PC-9 (cell line): ENCODE measurements at regions of chr11 and their contacts with region 1.

Region 1: DNA sequence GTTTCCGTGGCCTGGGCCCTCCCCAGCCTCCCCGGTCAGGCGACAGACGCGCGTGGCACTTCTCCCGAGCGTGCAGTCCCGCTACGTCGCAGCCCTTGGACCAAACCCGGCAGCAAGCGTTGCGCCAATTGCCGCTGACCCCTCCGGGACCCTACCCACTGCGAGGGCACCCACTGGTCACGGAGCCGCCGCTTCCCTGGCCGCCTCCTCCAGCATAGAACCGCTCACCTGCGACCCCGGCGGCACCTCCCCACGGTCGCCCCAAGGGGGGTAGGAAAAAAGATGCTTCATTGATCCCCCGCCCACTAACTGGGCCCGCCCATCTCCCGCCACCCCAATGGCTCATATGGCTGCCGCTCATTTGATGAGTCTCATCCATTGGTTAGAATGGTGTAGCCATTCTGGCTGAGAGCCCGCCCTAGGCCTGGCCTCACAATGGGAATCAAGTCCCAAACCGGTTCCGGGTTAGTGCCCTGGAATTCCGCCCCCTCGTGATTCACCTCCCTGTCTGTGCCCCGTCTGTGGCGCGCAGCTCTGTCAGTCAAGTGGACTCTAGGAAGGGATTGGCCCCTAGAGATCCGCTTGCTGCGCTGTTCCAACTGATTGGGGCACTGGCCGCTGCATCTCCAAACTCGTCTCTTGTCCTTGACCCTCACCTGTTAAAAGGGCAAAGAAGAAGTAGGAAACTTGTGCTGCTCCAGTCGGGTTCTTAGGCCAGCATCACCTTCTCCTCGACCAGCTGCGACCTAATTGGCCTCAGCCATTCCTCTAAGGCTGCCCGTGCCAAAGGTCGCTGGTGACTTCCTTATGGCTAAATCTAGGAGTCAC is at the start of gene MSANTD4:
- DNase-seq: peak; percentile 97 to 100
- H3K4me3 ChIP-seq: peak within 1 kb of the TSS; percentile 86
- H3K27ac ChIP-seq: peak within 1 kb of the TSS; percentile 36; the same call in 1 of the 2 replicates
- H3K4me1 ChIP-seq: peaks cover 30% of the 10 kb centered on the region
- H3K27me3 ChIP-seq: no peaks in the 10 kb centered on the region
- CTCF ChIP-seq: no peak
- total RNA-seq, gene MSANTD4: 11.0 and 13.6 TPM in 2 replicates

Region 2: DNA sequence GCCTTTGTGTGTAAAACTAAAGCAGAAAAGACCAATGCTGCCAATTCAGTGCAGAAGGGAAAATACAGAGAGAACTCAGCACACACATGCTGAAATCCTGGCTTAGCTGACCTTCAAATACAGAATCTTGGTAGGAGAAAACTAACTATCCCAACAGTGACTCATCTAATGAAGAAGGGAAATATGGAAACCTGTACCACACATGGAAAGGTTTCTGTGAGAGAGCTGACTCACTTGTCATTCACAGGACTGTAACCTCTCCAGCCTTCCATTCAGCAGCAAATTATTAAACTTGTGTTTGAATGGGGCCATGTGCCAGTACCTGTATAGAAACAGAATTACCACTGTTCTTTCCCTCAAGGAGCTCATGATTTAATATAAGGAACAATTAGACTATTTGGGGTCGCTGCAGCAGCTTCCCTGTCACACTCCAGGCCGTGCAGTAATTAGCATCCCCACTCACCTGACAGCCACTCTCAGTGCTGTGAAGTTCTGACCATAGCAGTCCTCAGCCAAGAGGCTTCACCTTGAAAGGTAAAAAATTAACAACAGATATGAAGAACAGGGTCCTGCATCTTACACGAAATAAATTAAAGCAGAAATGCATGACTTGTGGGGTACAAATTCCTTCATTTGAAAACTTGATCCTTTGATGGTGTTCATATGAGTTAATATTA is 54.0 kb before region 1 on chr11:
- CTCF ChIA-PET with region 1: no interaction called
- POLR2A ChIA-PET with region 1: no interaction called
- intact Hi-C with region 1: no loop called
- DNase-seq: no peak
- H3K4me3 ChIP-seq: no peak overlapping the region
- H3K27ac ChIP-seq: no peak overlapping the region
- H3K4me1 ChIP-seq: peaks cover 4% of the 10 kb centered on the region
- H3K27me3 ChIP-seq: no peaks in the 10 kb centered on the region
- CTCF ChIP-seq: no peak

Region 3: GRCh38 chr11:106047636-106048035 is 25.5 kb after region 1 on chr11:
- CTCF ChIA-PET with region 1: no interaction called
- POLR2A ChIA-PET with region 1: no interaction called
- intact Hi-C with region 1: no loop called
- DNase-seq: no peak
- H3K4me3 ChIP-seq: no peak overlapping the region
- H3K27ac ChIP-seq: no peak overlapping the region
- H3K4me1 ChIP-seq: peaks cover 5% of the 10 kb centered on the region; the same call in 1 of the 2 replicates
- H3K27me3 ChIP-seq: no peaks in the 10 kb centered on the region
- CTCF ChIP-seq: no peak

Region 4: GRCh38 chr11:106076919-106077608 is 54.9 kb after region 1 on chr11 and contains the start of gene KBTBD3:
- CTCF ChIA-PET with region 1: no interaction called
- POLR2A ChIA-PET with region 1: no interaction called
- intact Hi-C with region 1: loop called (anchors 2 kb)
- DNase-seq: peak; percentile 98 to 99
- H3K4me3 ChIP-seq: peak within 1 kb of the TSS; percentile 88
- H3K27ac ChIP-seq: peak within 1 kb of the TSS; percentile 63
- H3K4me1 ChIP-seq: peaks cover 25% of the 10 kb centered on the region
- H3K27me3 ChIP-seq: no peaks in the 10 kb centered on the region
- CTCF ChIP-seq: peak; percentile 56; the same call in 1 of the 2 replicates
- total RNA-seq, gene KBTBD3: 8.8 and 11.9 TPM in 2 replicates